ENCODE measurements at regions of chr2 and their contacts with region 1.

Region 1: DNA sequence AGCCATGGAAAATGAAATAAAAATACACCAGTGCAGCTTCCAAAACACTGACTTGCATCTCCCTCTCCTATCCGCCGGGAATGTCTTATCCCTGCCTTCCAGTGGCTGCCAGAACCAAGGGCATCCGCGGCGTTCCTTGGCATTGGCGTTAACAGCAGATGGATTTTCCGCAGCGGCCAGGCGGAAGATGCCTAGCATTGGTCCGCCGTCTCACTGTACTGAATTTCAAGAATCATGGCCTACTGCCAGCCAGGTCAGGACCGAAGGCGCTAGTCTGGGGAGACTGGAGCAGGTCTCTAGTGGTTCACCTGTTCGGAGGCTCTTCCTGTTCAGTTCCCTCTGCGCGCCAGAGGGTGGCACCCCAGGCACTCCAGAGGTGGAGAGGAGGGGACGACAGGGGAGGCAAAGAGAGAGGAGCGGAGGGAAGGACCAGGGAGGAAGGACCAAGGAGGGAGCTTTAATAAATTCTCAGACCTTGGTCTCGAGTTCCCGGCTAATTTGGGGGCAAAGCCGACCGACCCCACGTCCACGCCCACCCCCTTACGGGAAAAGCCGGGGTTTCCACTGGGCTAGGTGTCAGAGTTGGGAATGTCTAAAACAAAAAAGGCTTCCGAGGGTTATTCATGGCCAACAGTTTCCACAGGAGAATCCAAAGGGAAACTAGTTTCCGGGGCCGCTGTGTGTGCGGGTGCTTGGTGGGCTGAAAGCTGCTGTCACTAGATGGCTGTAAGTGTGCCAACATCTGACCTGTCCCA is 3.7 kb upstream of the BCL2L11 start:
- DNase-seq: peak; percentile 82
- ATAC-seq: peak; percentile 63

Region 2: DNA sequence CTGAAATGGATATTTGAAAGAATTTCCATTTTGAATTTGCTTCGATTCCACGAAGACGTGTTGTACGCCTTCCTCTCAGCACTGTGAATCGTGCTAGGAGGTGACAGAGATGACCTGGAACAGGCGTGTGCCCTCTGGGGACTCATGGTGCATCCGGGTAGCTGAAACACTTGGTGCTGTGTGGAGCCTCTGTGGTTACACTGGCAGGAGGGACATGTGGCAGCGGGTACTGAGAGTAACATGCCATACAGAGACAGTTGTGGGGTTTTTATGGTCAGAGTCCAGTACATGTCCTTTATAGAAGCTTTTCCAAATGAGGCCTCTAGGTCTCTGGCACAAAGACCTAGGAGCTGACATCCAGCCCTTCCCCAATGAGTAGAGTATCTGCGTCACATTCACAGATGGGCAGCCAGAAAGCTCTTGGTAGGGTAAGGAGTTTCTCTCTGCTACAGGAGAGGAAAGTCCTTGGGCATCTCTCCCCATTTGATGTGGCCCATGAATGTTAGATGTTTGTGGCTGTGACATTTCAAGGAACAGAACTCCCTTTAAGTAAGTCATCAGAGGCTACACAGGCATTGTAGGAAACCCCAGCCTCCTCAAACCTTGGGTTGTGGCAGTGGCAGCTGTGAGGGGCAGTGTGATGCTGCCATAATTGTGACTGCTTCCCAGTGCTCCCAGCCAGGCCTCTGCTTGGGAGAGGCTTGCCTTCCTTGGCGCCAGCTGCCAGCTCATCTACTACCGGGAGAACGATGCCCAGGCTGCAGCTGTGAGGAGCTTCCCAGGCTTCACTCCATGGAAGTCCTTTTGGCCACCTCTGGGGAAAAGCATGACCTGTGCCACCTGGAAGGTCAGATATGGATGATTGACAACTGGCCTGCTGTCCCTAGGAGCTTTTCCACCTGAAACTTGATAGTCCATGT is 304.0 kb before region 1 on chr2:
- intact Hi-C with region 1: loop called (anchors 5 kb)
- DNase-seq: no peak
- ATAC-seq: no peak

Region 3: GRCh38 chr2:111667542-111668273 is 550.7 kb after region 1 on chr2:
- intact Hi-C with region 1: loop called (anchors 10 kb)
- DNase-seq: no peak
- ATAC-seq: peak; percentile 88